Activated CD4-positive, alpha-beta memory T cell treated with anti-CD3 and anti-CD28 coated beads, Interleukin-2, amount 10 ng/mL, durations not matched to agents 7 days and 5 days (primary cell): ENCODE measurements at regions of chr1 and their contacts with region 1.

Region 1: DNA sequence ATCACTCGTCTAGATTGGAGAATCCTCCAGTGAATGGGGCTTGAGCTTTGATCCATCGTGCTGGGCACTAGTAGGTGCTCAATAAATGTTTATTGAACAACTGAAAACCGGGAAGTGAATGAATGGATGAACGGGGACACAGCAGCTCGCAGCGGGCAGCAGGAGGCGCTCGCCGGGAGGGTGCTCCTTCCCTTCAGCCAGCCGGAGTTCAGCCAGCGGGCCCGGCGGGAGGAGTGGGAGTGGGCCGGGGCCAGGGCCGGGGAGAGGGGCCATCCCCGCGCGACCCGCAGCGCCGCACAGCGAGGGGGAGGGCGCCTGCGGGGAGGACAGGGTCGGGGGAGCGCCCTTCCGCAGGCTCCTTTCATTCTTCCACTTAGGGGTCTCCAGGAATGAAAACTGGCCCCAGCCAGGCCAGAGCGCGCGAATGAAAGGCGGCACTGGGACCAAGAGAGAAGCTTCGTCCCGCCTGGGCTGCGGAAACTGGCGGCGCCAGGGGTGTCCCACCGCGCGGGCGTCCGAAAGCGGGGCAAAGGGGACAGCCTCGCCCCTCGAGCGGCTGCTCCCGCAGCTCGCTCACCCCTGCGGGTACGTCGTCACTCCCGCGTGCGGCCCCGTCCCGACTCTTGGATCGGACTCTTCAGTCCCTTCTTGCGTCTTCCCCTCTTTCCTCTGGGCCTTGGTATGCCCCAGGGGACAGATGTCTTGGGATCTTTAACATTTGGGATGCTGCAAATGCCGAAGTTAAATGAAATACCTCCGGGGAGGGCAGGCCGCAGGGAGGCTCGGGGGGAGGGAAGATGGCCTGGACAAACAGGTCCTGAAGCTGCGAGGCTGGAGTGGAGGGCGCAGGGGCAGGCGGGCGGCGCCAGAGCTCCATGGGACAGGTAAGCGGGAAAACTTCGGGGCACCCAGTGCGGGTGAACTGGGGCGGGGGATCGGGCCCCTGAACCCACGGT is 3.6 kb upstream of the INAVA start:
- DNase-seq: no peak
- H3K4me3 Mint-ChIP-seq: peak overlapping the region; percentile 27
- H3K27ac Mint-ChIP-seq: no peak overlapping the region
- H3K4me1 Mint-ChIP-seq: peaks cover 44% of the 10 kb centered on the region
- H3K27me3 Mint-ChIP-seq: peaks cover 59% of the 10 kb centered on the region

Region 2: DNA sequence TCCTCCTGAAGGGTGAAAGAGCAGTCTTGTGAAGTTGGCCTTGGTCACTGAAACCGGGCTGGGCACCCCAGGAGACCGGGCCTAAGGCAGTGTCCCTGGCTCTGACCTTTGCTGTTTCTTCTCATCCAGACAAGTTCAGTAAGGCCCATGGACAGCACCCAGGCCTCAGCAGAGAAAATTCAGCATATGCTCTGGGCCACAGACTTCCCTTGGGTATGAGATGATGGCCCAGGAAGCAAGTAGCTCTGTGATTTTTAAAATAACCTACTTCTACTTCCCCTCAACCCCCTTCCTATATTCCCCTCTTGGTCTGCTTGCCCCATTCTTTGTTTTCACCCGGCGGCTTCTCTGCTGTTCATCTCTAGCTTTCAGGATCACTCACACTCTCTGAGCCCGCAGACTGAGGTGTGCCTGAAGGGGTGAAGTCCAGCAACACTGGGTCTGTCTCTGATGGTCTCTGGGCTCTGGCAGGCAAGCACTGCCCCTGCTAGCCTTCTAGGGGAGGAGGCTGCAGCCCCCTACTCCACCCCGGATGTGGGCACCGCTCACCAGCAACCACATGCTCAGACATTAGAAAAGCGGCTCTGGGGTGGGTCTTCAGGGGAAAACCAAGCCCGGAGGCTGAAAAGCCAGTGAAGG is 21.2 kb before region 1 on chr1:
- CTCF ChIA-PET with region 1: interaction called, 5 read pairs
- POLR2A ChIA-PET with region 1: interaction called, 45 read pairs
- DNase-seq: peak; percentile 45
- H3K4me3 Mint-ChIP-seq: peak overlapping the region; percentile 6
- H3K27ac Mint-ChIP-seq: peak overlapping the region; percentile 34
- H3K4me1 Mint-ChIP-seq: peaks cover 50% of the 10 kb centered on the region
- H3K27me3 Mint-ChIP-seq: peaks cover 51% of the 10 kb centered on the region

Region 3: GRCh38 chr1:200877839-200878551 is 13.1 kb before region 1 on chr1:
- CTCF ChIA-PET with region 1: interaction called, 4 read pairs
- POLR2A ChIA-PET with region 1: interaction called, 45 read pairs
- DNase-seq: peak; percentile 68
- H3K4me3 Mint-ChIP-seq: no peak overlapping the region
- H3K27ac Mint-ChIP-seq: no peak overlapping the region
- H3K4me1 Mint-ChIP-seq: peaks cover 30% of the 10 kb centered on the region
- H3K27me3 Mint-ChIP-seq: peaks cover 47% of the 10 kb centered on the region

Region 4: GRCh38 chr1:200905411-200906052 is 14.4 kb after region 1 on chr1:
- CTCF ChIA-PET with region 1: interaction called, 3 read pairs
- POLR2A ChIA-PET with region 1: interaction called, 28 read pairs
- DNase-seq: peak; percentile 41
- H3K4me3 Mint-ChIP-seq: no peak overlapping the region
- H3K27ac Mint-ChIP-seq: no peak overlapping the region
- H3K4me1 Mint-ChIP-seq: peaks cover 9% of the 10 kb centered on the region
- H3K27me3 Mint-ChIP-seq: peaks cover 57% of the 10 kb centered on the region